Heart left ventricle (tissue), 16 donors: ENCODE measurements at regions of chr10 and their contacts with region 1.

Region 1: DNA sequence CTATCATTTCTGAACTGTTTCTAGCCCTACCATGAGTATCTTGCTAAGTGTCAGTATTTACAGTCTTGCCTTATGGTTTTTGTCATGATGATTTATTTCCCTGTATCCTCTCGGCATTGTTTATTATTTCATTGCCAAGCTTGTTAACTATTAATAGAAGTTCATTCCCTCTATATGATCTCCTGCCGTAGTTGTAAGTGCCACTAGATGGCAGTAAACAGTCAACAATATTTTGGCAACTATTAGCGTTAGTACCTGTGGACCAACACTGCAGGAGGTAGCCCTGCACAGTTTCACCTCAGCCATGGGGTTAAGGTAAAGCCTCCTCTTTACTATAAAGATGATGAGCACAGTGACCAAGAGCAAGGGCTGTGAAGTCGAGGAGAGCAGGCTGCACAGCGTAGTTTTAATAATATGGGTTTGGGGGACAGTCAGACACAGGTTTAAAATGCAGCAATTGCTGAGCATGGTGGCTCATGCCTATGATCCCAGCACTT is 26.1 kb upstream of the CCNJ start:
- DNase-seq: peak in 1 of 5 donors; percentile 12
- ATAC-seq: peak; percentile 26 to 85 (median 72)
- H3K4me3 ChIP-seq: no peak overlapping the region
- H3K27ac ChIP-seq: no peak overlapping the region
- H3K4me1 ChIP-seq: peaks cover 0 to 5% (median 0%) of the 10 kb centered on the region in 12 donors
- H3K27me3 ChIP-seq: no peaks in the 10 kb centered on the region
- CTCF ChIP-seq: peak; percentile 58 to 84 (median 74)
- POLR2A ChIP-seq: no peak

Region 2: GRCh38 chr10:95998255-95998784 is 18.9 kb before region 1 on chr10:
- intact Hi-C with region 1: no loop called
- DNase-seq: no peak
- ATAC-seq: no peak
- H3K4me3 ChIP-seq: no peak overlapping the region
- H3K27ac ChIP-seq: no peak overlapping the region
- H3K4me1 ChIP-seq: no peaks in the 10 kb centered on the region
- H3K27me3 ChIP-seq: no peaks in the 10 kb centered on the region
- CTCF ChIP-seq: no peak
- POLR2A ChIP-seq: no peak

Region 3: DNA sequence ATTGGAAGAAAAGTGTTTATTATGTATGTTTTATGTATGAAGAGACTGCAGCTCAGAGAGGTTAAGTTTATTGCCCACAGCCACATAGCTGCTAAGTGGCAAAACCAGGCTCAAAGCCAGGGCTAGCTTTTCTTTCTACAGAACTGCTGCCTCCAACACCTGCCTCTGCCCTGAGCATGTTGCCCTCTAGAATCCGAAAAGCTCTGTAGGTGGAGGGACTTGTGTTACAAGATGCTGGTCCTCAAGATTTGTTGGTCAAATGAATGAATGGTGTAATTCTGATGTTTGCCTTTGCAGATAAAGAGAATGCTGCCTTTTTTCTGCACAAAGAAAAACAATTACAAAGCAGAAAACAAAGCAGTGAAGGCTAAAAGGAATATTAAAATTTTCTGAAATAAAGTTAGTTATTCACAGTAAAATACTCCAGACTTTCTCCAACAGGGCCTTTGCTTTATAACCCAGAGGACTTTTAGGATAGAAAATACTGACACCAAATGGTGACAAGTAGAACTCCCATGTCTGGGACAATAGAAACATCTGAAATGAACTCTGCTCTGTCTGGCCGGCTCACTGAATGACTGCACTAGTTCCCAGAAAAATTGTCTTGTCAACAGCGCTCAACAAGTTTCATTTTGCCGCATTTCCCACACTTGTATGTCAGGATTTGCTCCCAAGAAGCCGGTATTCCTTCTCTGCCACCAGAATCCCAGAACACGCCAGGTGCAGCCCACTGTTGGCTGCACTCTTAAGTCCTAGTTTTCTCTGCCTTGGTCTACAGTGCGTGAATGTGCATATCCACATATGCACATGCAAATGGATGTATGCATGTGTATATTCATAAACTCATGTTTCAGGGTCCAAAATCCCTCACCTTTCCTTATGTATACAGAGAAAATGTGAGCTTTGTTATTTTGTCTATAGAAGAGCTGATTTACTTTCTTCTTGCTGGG is 276.0 kb after region 1 on chr10:
- intact Hi-C with region 1: loop called (anchors 2 to 5 kb)
- DNase-seq: no peak
- ATAC-seq: peak; percentile 66 to 83 (median 77)
- H3K4me3 ChIP-seq: no peak overlapping the region
- H3K27ac ChIP-seq: no peak overlapping the region
- H3K4me1 ChIP-seq: peaks cover 0 to 5% (median 0%) of the 10 kb centered on the region in 12 donors
- H3K27me3 ChIP-seq: peaks cover 0 to 40% (median 3%) of the 10 kb centered on the region in 9 donors
- CTCF ChIP-seq: peak; percentile 33 to 72 (median 58)
- POLR2A ChIP-seq: no peak

Region 4: DNA sequence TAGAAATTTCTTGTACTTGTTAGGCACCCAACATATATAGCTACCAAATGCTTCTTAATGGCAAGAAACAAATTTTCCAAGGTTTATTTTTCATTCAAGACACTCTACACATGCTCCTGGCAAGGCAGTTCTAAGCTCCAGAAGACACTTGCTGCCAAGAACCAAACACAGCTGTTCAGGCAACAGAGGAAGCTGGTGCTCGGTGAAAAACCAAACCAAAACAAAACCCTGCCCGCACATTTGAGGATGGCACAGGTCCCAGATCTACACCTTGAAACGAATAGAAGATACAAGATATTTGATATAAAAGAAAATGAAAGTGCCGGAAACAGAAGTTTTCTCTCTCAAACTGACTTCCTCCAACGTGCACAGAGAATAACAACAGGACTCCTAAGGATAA is 282.1 kb after region 1 on chr10:
- intact Hi-C with region 1: loop called in 7 of 10 experiments (anchors 2 to 5 kb)
- DNase-seq: no peak
- ATAC-seq: no peak
- H3K4me3 ChIP-seq: peak overlapping the region in 2 of 12 donors; percentile 3 to 10
- H3K27ac ChIP-seq: no peak overlapping the region
- H3K4me1 ChIP-seq: peaks cover 0 to 12% (median 0%) of the 10 kb centered on the region in 12 donors
- H3K27me3 ChIP-seq: peaks cover 0 to 19% (median 0%) of the 10 kb centered on the region in 9 donors
- CTCF ChIP-seq: no peak
- POLR2A ChIP-seq: no peak

Region 5: DNA sequence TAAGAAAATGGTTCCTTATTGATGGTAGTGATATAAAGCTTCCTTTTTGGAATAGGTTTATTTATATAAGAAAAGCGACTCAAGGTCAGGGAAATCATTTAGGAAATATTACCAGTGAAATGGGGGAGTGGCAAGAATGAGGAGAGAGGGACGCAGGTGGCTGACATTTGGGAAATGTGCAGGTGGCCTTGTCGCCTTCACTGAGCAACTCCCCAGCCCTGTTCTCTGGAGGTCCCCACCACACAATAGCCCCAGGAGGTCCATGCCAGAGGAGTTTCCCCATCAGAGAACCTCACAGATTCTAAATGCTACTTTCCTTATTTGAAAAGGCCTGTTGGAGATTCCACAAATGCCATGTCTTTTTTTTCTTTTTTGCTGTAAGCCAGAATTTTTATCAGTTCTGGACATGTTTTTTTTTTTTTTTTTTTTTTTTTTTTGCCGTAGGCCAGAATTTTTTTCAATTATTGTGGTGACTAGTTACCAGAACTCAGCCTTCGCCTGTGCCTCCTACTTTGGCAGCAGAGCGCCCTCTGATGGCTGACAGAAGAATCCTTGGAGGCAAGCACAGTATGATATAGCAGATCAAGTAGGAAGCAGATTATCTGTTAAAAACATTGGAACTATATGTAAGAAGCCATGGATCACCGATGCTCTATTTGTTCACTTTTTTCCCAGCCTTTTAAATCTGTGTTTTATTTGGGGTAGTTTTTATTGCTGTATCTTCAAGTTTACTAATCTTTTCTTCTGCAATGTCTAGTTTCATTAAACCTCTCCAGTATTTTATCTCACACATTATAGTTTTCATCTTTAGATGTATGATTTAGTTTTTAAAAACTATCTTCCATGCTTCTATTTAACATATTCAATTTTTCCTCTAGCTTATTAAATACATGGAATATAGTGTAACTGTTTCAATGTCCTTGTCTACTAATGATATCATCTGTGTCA is 323.0 kb after region 1 on chr10:
- intact Hi-C with region 1: loop called in 3 of 10 experiments (anchors 5 to 10 kb)
- DNase-seq: peak in 4 of 5 donors; percentile 19 to 61 (median 44)
- ATAC-seq: peak in 2 of 4 donors; percentile 65 to 78
- H3K4me3 ChIP-seq: no peak overlapping the region
- H3K27ac ChIP-seq: no peak overlapping the region
- H3K4me1 ChIP-seq: peaks cover 0 to 3% (median 0%) of the 10 kb centered on the region in 12 donors
- H3K27me3 ChIP-seq: peaks cover 0 to under 1% (median 0%) of the 10 kb centered on the region in 9 donors
- CTCF ChIP-seq: peak; percentile 49 to 73 (median 62)
- POLR2A ChIP-seq: no peak